HepG2 (cell line): ENCODE measurements at regions of chr18 and their contacts with region 1.

Region 1: DNA sequence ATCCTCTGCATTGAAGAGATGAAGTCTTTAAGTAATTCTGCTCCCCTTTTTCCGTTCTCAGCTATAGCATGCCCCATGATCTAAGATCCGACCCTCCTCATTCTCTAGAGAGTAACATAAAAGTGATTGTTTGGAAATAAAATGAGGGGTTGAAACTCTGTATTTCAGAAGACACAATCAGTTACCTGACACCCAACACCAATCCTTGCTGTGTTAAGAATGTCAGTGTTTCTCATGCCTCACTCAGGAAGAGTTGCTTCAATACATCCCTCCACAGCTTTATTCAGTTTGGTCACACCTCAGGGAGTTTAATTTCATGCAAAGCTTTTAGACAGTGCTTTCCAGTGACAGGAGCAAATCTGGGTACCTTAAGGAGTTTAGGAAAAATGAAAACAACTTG is 49.9 kb upstream of the RBBP8 start:
- DNase-seq: no peak
- ATAC-seq: no peak
- H3K4me3 ChIP-seq: no peak overlapping the region
- H3K27ac ChIP-seq: no peak overlapping the region
- H3K4me1 ChIP-seq: no peaks in the 10 kb centered on the region
- H3K27me3 ChIP-seq: no peaks in the 10 kb centered on the region
- CTCF ChIP-seq: no peak
- EP300 ChIP-seq: no peak
- POLR2A ChIP-seq: no peak
- RAD21 ChIP-seq: no peak

Region 2: DNA sequence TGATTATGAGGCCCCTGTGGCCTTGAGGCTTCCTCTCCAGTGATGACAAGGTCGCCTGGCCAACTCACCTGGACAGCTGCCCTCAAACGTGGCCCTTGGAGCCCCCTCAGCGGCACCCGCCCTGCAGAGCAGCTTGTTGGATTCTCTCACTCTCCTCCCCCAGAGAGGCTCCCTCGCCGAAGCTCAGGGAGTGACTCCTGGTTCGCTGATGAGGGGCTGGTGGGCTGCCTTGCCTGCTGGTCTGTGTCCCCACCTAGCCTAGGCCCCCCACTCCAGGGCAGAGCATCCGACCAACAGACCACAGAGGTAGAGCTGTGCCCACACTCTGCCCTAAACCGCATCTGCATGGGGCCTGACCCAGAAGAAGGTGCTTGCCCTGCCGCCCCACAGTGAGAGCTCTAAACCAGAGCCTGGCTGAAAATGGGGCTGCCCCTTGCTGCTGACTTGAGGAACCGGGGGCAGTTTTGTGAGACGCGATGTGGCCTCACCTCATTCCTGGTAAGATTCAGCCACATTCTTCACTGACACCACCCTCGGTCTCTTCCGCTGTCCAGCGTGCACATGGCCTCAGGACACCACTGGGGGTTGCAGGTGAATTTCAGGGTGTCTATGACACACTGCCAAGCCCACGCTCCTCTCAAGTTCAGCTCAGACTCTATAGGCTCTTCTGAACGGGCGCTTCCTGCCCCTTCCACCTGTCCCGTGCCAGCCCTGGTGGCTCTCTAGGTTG is 383.7 kb after region 1 on chr18:
- CTCF ChIA-PET with region 1: no interaction called
- POLR2A ChIA-PET with region 1: no interaction called
- in situ Hi-C with region 1: no loop called
- intact Hi-C with region 1: loop called (anchors 5 kb)
- DNase-seq: no peak
- ATAC-seq: no peak
- H3K4me3 ChIP-seq: no peak overlapping the region
- H3K27ac ChIP-seq: no peak overlapping the region
- H3K4me1 ChIP-seq: peaks cover 8% of the 10 kb centered on the region
- H3K27me3 ChIP-seq: no peaks in the 10 kb centered on the region
- CTCF ChIP-seq: no peak
- EP300 ChIP-seq: no peak
- POLR2A ChIP-seq: no peak
- RAD21 ChIP-seq: no peak